RWPE1 (cell line): ENCODE measurements at regions of chr19 and their contacts with region 1.

Region 1: DNA sequence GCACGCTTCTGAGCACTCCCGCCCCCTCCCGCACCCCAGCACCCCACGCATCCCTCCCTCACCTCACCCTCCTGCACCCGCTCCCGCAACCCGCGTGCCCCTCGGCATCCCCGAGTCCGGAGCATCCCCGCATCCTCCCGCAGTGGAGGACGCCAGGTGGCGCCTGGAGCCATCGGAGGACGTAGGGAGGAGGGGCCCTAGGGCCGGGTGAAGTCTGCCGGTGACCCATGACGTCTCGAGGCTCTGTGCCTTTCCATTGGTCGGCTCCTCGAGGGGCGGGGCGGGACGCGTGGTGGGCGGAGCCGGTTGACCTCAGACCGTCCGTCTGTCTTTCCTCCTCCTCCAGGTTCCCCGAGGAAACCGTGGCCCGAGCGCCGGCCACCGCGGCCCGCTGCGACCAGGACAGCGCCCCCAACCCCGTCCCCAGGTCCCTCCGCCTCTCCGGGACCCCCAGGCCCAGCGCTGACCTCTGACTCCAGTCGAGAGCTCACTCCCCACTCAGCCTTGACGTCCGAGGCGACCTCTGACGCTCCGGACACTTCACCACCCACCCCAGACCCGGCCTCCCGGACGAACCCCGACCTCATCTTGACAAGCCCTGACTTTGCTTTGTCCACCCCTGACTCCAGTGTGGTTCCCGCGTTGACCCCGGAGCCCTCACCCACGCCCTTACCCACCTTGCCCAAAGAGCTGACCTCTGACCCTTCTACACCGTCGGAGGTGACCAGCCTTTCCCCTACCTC is 19.9 kb downstream of the SBK2 start:
- DNase-seq: peak; percentile 100
- H3K27ac ChIP-seq: peak overlapping the region; percentile 73
- CTCF ChIP-seq: peak; percentile 88

Region 2: GRCh38 chr19:55467236-55468053 is 49.6 kb before region 1 on chr19:
- CTCF ChIA-PET with region 1: no interaction called
- POLR2A ChIA-PET with region 1: no interaction called
- DNase-seq: peak; percentile 61
- H3K27ac ChIP-seq: no peak overlapping the region
- CTCF ChIP-seq: peak; percentile 99

Region 3: GRCh38 chr19:55632463-55632834 is 115.4 kb after region 1 on chr19:
- CTCF ChIA-PET with region 1: interaction called, 20 read pairs
- POLR2A ChIA-PET with region 1: no interaction called
- DNase-seq: no peak
- H3K27ac ChIP-seq: peak overlapping the region; percentile 22
- CTCF ChIP-seq: peak; percentile 74